ENCODE measurements at regions of chr9 and their contacts with region 1.

Region 1: DNA sequence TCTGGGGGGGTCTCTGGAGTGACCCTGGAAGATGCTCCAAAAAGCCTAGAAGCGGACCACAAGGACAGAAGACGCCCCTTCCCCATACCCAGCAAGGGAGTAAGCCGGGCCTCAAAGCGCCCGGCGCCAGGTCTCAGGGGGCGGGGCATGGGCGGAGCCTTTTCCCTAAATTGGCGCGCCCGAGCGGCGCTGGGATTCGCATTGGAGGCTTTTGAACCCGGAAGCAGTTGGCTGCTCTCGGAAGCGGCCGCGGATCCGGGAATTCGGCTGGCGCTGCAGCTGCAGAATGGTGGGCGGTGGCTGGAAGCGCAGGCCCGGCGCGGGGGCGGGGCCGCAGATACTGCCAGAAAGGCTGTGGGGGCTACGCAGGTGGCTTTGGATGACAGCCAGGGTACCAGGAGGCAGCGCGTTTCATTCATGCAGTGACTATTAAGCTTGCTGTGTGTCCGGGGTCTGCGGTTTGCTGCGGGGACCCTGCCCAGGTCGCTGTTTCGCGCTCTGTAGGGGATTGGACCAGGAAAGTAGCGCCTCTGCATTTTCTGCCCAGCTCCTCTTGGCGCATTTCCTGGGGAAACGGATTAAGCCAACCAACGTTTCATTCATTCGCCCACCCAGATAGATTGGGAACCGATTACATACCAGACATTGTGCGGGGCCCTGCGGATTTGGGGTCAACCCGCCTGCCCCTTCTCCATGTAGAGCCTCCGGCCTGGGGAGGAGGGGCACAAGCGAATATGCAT is 83.0 kb upstream of the FREM1 start:
- DNase-seq: peak; percentile 93 to 94
- ATAC-seq: peak; percentile 92
- H3K4me3 ChIP-seq: peak overlapping the region; percentile 14 to 84
- H3K27ac ChIP-seq: no peak overlapping the region
- H3K4me1 ChIP-seq: no peaks in the 10 kb centered on the region
- H3K27me3 ChIP-seq: no peaks in the 10 kb centered on the region

Region 2: DNA sequence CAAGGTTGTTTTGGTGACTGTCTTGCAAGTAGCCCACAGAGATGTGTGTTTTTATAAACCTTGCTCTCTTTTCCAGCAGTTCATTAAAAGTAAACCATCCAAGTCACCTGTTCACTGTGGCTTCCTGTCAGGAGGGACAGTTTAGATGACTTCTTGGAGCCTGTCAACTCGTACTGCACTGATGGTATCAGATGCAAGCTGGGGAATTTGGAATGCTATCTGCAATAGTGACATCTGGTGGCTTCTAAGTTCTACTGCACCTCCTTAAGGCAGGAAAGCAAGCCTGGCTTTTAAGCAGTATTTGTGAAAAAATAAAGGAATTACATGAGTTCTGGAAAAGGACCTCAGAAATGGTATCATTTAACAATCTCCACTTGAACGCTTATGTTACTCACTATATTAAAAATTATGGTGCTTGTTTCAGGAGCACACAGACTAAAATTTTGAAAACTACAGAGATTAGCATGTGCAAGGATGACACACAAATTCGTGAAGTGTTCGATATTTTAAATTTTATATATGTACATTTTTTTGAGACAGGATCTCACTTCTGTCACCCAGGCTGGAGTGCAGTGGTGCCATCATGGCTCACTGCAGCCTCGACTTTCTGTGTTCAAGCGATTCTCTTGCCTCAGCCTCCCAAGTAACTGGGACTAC is 149.8 kb after region 1 on chr9:
- intact Hi-C with region 1: loop called in 1 of 2 experiments (anchors 10 kb)
- DNase-seq: no peak
- ATAC-seq: peak; percentile 82
- H3K4me3 ChIP-seq: no peak overlapping the region
- H3K27ac ChIP-seq: no peak overlapping the region
- H3K4me1 ChIP-seq: no peaks in the 10 kb centered on the region
- H3K27me3 ChIP-seq: no peaks in the 10 kb centered on the region

Region 3: GRCh38 chr9:15205632-15206420 is 212.6 kb after region 1 on chr9:
- intact Hi-C with region 1: no loop called
- DNase-seq: no peak
- ATAC-seq: no peak
- H3K4me3 ChIP-seq: no peak overlapping the region
- H3K27ac ChIP-seq: no peak overlapping the region
- H3K4me1 ChIP-seq: peaks cover 0 to 3% of the 10 kb centered on the region in 2 donors
- H3K27me3 ChIP-seq: no peaks in the 10 kb centered on the region

Measured in aorta (tissue), 5 donors.